ENCODE measurements at regions of chr21 and their contacts with region 1.

Region 1: DNA sequence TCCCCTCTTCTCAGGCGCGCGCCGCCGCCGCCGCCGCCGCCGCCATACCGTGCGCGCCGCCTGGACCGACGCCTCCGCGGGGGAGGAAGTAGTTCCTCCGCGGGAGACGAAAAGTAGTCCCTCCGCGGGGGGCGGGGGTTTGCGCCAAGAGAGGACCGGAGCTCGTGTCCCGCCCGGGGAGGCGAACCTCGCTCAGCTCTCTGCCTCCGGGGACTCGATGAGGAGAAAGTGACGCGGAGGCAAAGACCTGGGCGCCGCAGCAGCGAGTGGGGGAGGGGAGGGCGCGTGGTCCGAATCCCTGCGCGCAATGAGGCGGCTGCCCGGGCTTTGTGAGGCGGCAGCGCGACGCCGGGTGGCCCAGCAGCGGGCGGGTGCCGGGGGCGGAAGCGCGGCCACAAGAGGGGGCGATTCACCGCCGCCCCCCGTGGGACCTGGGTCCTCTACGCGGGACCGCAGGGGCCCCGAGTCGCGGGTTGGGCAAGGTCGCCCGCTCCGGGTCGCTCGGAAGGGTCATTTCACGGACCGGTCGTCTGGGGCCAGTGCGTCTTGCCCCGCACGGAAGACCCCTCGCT is at the start of gene BRWD1:
- H3K4me3 Mint-ChIP-seq: peak within 1 kb of the TSS; percentile 87
- H3K27ac Mint-ChIP-seq: peak within 1 kb of the TSS; percentile 93
- H3K4me1 Mint-ChIP-seq: peaks cover 56% of the 10 kb centered on the region
- H3K27me3 Mint-ChIP-seq: no peaks in the 10 kb centered on the region

Region 2: DNA sequence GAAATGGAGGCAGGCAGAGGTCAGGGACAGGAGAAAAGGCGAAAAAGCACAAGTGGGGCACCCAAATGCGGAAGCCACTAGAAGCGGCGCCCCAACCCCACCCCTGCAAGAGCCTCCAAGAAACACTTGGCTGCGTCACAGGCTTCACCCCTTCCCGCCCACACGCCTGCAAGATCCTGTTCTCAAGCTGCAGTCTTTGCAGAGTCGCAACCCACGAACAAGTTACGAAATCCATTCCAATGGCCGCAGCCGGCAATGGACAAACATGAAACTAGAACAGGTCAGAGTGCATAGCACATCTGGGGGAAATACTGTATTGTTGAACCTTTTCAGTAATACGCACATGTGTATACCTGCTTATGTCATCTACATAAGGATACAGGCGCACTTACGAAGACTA is 234.0 kb before region 1 on chr21:
- intact Hi-C with region 1: no loop called
- H3K4me3 Mint-ChIP-seq: peak overlapping the region; percentile 24
- H3K27ac Mint-ChIP-seq: peak overlapping the region; percentile 81
- H3K4me1 Mint-ChIP-seq: peaks cover 61% of the 10 kb centered on the region
- H3K27me3 Mint-ChIP-seq: peaks cover 7% of the 10 kb centered on the region

Region 3: GRCh38 chr21:39217356-39218081 is 96.1 kb before region 1 on chr21:
- intact Hi-C with region 1: no loop called
- H3K4me3 Mint-ChIP-seq: no peak overlapping the region
- H3K27ac Mint-ChIP-seq: no peak overlapping the region
- H3K4me1 Mint-ChIP-seq: no peaks in the 10 kb centered on the region
- H3K27me3 Mint-ChIP-seq: no peaks in the 10 kb centered on the region

Region 4: DNA sequence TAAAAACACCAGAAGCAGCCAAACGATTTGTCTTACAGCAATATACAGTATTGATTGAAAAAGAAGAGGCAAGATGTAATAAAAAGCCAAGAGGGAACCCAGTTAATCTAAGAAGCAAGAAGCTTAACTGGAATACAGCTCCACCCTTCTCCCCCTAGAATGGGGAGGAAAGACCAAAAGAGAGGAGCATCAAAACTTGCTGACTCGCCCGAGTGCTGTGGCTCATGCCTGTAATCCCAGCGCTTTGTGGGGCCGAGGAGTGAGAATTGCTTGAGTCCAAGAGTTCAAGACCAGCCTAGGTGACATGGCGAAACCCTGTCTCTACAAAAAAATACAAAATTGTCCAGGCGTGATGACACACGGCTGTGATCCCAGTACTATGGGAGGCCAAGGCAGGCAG is 32.5 kb before region 1 on chr21:
- intact Hi-C with region 1: no loop called
- H3K4me3 Mint-ChIP-seq: no peak overlapping the region
- H3K27ac Mint-ChIP-seq: no peak overlapping the region
- H3K4me1 Mint-ChIP-seq: peaks cover 5% of the 10 kb centered on the region
- H3K27me3 Mint-ChIP-seq: no peaks in the 10 kb centered on the region

Region 5: DNA sequence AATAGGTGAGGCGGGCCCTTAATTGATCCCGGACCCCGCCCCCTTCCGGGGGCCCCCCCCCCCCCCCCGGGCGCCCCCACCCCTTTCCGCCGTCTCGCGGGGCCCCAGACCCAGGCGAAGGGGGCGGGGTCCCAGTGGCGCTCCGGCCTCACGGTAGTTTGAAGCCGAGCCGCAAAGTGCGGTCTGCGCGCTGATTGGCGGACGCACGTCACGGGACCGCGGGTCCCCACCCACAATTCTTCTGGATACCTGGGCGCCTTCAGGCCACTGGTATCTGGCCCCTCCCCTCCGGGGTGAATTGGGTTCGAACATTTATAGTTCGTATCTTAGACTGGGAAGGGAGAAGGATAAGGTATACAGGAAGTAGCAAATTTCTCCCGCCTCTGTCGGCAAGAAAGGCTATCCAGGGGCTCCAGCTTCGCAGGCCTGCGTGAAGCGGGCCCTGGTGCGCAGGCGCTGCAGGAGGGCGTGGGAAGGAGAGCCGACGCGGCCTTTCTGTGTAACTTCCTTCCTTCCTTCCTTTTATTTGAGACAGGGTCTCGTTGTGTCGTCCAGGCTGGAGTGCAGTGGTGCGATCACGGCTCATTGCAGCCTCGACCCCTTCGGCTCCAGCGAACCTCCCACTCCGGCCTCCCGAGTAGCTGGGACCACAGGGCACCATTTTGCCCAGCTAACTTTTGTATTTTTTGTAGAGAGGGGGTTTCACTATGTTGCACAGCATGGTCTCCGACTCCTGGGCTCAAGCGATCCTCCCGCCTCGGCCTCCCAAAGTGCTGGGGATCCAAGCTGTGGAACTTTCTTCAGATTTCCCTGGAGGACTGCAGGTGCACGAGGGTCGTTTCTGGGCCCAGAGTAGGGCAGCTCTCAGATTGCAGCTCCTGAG is 35.8 kb after region 1 on chr21:
- intact Hi-C with region 1: loop called (anchors 1 kb)
- H3K4me3 Mint-ChIP-seq: peak overlapping the region; percentile 96
- H3K27ac Mint-ChIP-seq: peak overlapping the region; percentile 94
- H3K4me1 Mint-ChIP-seq: peaks cover 30% of the 10 kb centered on the region
- H3K27me3 Mint-ChIP-seq: no peaks in the 10 kb centered on the region

Region 6: DNA sequence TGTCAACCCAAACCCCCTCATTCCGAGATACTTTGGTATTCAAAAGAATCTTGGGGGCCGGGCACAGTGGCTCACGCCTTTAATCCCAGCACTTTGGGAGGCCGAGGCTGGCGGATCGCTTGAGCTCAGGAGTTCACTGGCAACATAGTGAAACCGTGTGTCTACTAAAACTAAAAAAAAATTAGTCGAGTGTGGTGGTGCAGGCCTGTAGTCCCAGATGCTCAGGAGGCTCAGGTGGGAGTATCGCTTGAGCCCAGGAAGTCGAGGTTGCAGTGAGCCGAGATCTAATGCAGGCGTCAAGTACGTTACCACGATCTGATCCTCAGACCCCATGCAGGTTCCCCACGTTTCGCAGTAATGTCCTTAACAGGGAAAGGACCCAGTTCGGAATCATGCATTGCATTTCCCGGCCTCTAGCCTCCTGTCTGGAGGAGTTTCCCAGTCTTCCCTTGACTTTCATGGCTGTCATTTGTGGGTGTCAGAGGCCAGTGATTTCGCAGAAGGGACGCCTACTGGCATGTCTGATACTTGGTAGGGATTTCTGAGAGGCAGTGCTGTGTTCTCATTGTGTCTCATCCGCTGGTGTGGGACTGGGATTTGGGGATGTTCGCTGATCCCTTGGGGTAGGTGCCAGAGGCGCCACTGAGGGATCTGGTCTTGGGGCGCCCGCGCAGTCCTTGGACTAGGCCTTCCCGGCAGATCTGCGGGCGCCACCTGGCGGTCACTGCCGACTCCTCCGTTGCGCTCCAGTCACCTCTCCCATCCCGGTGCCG is 74.6 kb after region 1 on chr21:
- intact Hi-C with region 1: loop called (anchors 1 kb)
- H3K4me3 Mint-ChIP-seq: peak overlapping the region; percentile 70
- H3K27ac Mint-ChIP-seq: peak overlapping the region; percentile 69
- H3K4me1 Mint-ChIP-seq: peaks cover 25% of the 10 kb centered on the region
- H3K27me3 Mint-ChIP-seq: no peaks in the 10 kb centered on the region

Region 7: DNA sequence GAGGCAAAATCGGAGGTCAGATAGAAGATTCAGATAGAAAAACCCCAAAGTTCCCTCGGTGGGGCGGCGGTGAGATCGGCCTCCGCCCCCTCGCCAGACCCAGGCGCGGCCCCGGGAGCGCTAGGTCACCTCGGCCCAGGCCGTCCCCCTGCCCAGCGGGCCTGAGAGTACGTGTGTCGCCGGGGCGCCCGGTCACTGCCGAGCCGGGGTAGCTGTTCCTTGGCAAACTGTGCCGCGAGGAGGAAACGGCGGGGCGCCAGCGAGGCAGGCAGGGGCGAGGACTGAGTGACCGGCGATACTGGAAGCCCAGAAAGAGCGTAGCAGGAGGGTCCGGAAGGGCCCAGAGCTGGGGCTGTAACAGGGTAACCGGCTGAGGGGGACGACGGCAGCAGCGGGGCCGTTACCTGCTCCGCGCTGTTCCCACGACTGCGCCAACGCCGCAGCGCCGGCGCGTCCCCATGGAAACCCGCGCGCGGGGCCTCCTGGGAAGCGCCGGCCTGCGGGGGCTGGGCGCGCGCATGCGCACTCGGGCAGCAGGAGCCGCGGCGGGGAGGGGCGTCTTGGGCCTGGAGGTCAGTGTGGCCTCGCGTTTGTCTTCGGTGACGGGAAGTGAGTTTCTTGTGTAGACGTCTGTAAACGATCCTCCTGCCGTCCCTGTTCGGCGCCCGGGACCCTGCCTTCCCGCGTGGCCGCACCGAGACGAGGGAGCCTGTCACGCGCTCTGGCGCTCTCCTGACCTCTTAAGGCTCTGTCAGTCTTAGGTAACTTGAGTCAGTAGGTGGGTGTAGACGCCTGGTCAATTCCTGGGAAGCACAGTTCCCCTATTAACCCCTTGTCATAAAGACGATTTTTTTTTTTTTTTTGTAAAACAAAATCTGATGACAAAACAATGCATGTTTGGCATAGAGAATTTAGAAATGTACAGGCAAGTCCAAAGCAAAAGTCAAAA is 131.9 kb after region 1 on chr21 and contains the start of gene LCA5L:
- intact Hi-C with region 1: loop called (anchors 10 kb)
- H3K4me3 Mint-ChIP-seq: peak within 1 kb of the TSS; percentile 92
- H3K27ac Mint-ChIP-seq: peak within 1 kb of the TSS; percentile 95
- H3K4me1 Mint-ChIP-seq: peaks cover 11% of the 10 kb centered on the region
- H3K27me3 Mint-ChIP-seq: peaks cover 29% of the 10 kb centered on the region